Upper lobe of right lung (tissue), 1 donor: ENCODE measurements at regions of chr1 and their contacts with region 1.

Region 1: GRCh38 chr1:184805667-184806295 is 51.1 kb upstream of the EDEM3 start:
- DNase-seq: peak; percentile 91
- ATAC-seq: peak; percentile 99
- H3K4me3 ChIP-seq: no peak overlapping the region
- H3K27ac ChIP-seq: no peak overlapping the region
- H3K4me1 ChIP-seq: no peaks in the 10 kb centered on the region
- H3K27me3 ChIP-seq: no peaks in the 10 kb centered on the region
- CTCF ChIP-seq: peak; percentile 91

Region 2: DNA sequence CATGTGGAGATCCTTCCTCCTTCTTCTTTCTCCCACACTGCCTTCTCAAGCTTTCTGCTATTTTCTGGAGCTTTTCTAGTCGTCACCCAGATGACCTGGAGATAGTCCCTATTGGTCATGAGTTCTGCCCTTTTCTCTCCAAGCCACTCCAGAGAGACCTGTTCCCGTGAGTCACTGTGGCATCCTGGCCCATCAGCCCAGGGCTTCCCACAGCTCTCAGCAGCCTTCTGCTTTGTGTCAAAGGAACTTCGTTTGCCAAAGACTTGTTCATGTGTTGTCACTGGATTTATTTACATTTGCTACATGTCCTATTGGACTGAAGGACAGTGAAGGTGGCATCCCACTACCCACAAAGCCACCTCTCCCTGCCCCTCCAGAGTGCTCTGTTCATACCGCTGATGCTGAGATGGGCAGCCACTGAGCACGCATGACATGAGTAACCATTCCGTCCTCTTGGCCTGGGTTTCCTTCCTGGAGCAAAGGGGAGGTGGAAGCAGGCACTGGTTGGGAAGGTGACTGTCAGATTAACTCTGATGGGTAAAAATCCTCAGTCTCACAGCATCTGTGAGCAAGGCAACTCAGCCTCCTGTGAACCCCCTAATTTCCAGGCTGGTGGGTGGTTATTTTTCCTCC is 170.3 kb before region 1 on chr1:
- intact Hi-C with region 1: no loop called
- DNase-seq: no peak
- ATAC-seq: no peak
- H3K4me3 ChIP-seq: no peak overlapping the region
- H3K27ac ChIP-seq: no peak overlapping the region
- H3K4me1 ChIP-seq: peaks cover 5% of the 10 kb centered on the region
- H3K27me3 ChIP-seq: no peaks in the 10 kb centered on the region
- CTCF ChIP-seq: no peak

Region 3: DNA sequence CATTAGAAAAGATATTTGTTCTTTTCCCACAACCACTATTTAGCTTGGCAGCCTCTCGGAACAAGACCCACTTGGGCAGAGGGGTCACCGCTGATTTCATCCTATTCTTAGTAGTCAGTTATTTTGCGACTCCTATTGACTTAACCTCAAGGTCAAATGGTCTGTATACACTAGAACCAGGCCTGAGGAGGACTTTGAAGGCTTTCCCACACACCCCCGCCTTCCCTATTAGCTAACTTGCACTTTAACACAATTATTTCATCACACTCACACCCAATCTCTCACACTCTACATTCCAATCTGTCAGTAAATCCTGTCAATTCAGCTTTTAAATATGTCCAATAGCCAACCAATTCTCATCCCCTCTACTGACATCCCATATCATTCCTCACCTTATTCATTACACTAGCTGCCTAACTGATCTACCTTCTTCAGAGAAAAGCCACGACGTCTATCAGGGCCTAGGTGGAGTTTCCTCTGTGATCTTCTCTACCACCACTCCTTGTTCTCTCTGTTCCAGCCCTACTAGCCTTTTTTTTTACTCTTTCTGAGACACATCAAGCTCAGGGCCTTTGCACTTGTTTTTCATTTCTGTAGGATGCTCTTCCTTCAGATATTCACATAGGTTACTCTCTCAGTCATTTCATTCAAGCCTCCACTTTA is 169.6 kb after region 1 on chr1:
- intact Hi-C with region 1: loop called (anchors 5 kb)
- DNase-seq: no peak
- ATAC-seq: peak; percentile 44
- H3K4me3 ChIP-seq: no peak overlapping the region
- H3K27ac ChIP-seq: no peak overlapping the region
- H3K4me1 ChIP-seq: peaks cover 9% of the 10 kb centered on the region
- H3K27me3 ChIP-seq: no peaks in the 10 kb centered on the region
- CTCF ChIP-seq: no peak